ENCODE measurements at regions of chr9 and their contacts with region 1.

Region 1: DNA sequence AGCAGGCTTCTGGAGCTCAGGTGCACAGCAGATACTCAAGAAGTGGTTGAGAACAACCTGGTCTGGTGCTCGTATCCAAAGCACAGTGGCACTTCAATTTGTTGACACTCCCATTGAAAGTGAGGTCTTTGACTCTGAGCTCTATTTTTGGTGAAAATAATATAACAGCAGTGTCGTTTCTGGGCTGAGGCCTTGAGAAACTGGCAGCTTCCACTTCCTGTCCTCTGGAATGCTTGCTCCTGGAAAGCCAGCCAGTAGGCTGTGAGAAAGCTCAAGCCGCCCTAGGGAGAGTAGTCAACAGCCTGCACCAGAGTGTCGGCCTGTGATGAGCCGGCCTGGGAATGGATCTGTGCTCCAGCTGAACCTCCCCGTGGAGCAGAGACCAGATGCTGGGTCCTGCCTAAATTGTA is 6.8 kb upstream of the SUSD3 start:
- DNase-seq: no peak
- ATAC-seq: no peak
- H3K4me3 ChIP-seq: no peak overlapping the region
- H3K4me3 Mint-ChIP-seq: no peak overlapping the region
- H3K27ac ChIP-seq: no peak overlapping the region
- H3K27ac Mint-ChIP-seq: peak overlapping the region; percentile 21
- H3K4me1 ChIP-seq: peaks cover 48% of the 10 kb centered on the region
- H3K4me1 Mint-ChIP-seq: peaks cover 53% of the 10 kb centered on the region
- H3K27me3 ChIP-seq: no peaks in the 10 kb centered on the region
- H3K27me3 Mint-ChIP-seq: no peaks in the 10 kb centered on the region
- CTCF ChIP-seq: no peak

Region 2: GRCh38 chr9:92359394-92359995 is 692.2 kb before region 1 on chr9:
- CTCF ChIA-PET with region 1: no interaction called
- POLR2A ChIA-PET with region 1: no interaction called
- intact Hi-C with region 1: no loop called
- DNase-seq: no peak
- ATAC-seq: no peak
- H3K4me3 ChIP-seq: no peak overlapping the region
- H3K4me3 Mint-ChIP-seq: no peak overlapping the region
- H3K27ac ChIP-seq: no peak overlapping the region
- H3K27ac Mint-ChIP-seq: no peak overlapping the region
- H3K4me1 ChIP-seq: no peaks in the 10 kb centered on the region
- H3K4me1 Mint-ChIP-seq: no peaks in the 10 kb centered on the region
- H3K27me3 ChIP-seq: no peaks in the 10 kb centered on the region
- H3K27me3 Mint-ChIP-seq: no peaks in the 10 kb centered on the region
- CTCF ChIP-seq: no peak

Region 3: DNA sequence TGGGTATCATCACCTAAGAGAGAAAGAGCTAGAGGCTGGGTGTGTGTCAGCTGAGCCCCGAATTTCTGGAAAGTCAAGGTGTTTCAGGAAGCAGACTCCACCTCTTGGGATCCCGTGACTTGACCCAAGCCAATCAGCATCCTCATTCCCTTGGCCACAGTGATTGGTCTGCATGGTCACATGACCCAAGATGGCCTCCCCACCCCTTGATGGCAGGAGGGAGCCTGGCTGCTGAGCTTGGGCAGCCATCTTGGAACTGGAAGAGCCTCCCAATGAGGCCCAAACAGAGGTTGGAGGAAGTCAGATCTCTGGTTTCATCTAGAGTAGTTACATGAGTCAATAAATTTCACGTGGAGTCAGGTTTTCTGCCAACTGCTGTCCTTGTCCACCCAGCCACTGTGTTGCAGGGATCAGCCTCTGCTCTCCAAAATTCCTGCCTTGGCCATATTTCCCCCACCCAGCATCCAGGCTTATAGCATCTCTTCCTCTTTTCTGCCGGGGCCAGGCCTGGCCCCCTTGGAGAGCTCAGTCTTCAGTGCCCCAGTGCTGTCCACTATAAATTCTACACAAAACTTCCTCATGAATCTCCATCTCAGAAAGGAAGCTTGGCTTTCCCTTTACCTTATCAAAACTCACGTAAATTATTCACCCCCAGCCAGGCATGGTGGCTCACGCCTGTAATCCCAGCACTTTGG is 10.4 kb before region 1 on chr9:
- CTCF ChIA-PET with region 1: interaction called, 11 read pairs
- POLR2A ChIA-PET with region 1: interaction called, 11 read pairs
- intact Hi-C with region 1: no loop called
- DNase-seq: peak in 1 of 9 experiments; percentile 50
- ATAC-seq: no peak
- H3K4me3 ChIP-seq: no peak overlapping the region
- H3K4me3 Mint-ChIP-seq: no peak overlapping the region
- H3K27ac ChIP-seq: peak overlapping the region in 1 of 2 experiments; percentile 28
- H3K27ac Mint-ChIP-seq: peak overlapping the region; percentile 79
- H3K4me1 ChIP-seq: peaks cover 53% of the 10 kb centered on the region
- H3K4me1 Mint-ChIP-seq: peaks cover 67% of the 10 kb centered on the region
- H3K27me3 ChIP-seq: no peaks in the 10 kb centered on the region
- H3K27me3 Mint-ChIP-seq: no peaks in the 10 kb centered on the region
- CTCF ChIP-seq: no peak

Measured in CD8-positive, alpha-beta T cell (primary cell).